ENCODE measurements at regions of chr6 and their contacts with region 1.

Region 1: GRCh38 chr6:100099189-100100074 is 105.4 kb upstream of the MCHR2 start:
- DNase-seq: no peak
- ATAC-seq: no peak
- H3K4me3 Mint-ChIP-seq: no peak overlapping the region
- H3K27ac Mint-ChIP-seq: no peak overlapping the region
- H3K4me1 Mint-ChIP-seq: no peaks in the 10 kb centered on the region
- H3K27me3 Mint-ChIP-seq: peaks cover 2% of the 10 kb centered on the region

Region 2: GRCh38 chr6:100001915-100002388 is 97.5 kb before region 1 on chr6:
- CTCF ChIA-PET with region 1: interaction called, 47 read pairs
- POLR2A ChIA-PET with region 1: no interaction called
- DNase-seq: peak; percentile 45
- ATAC-seq: peak; percentile 61
- H3K4me3 Mint-ChIP-seq: no peak overlapping the region
- H3K27ac Mint-ChIP-seq: no peak overlapping the region
- H3K4me1 Mint-ChIP-seq: no peaks in the 10 kb centered on the region
- H3K27me3 Mint-ChIP-seq: peaks cover 19% of the 10 kb centered on the region

Region 3: DNA sequence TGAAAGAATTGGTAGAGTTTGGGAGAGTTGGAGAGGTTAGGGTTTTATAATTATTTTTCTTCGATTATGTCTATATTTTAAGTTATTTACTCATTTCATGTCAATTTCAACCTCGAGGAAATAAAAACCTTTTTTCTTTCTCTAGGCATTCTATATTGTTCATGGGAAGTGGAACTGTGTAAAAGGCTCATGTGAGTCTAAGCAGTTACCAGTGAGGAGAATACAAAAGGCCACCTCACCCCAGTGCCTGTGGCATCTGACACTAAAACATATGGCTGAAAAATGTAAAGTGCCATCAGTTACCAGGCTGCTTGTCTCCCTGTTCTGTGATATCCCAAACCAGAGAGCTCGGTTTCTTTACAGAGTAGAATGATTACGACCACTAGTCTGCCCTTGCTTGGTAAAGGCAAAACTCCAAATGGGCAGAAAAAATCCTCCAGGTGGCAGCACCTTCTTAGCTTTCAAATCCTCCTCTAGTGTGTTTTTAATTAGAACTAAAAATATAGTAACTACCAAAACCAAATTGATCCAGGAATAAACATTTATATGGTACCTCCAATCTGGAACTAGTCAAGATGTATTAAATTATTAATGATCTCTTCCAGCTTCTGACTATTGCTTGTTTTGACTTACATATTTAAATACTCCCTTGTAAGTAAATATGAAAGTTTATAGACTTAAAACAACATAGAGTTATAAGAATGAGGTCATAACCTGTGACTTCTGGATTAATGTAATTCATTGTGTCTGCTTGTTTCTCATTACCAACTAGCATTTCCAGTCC is 17.2 kb after region 1 on chr6:
- CTCF ChIA-PET with region 1: interaction called, 14 read pairs
- POLR2A ChIA-PET with region 1: no interaction called
- DNase-seq: peak; percentile 43
- ATAC-seq: no peak
- H3K4me3 Mint-ChIP-seq: no peak overlapping the region
- H3K27ac Mint-ChIP-seq: no peak overlapping the region
- H3K4me1 Mint-ChIP-seq: no peaks in the 10 kb centered on the region
- H3K27me3 Mint-ChIP-seq: peaks cover 10% of the 10 kb centered on the region

Region 4: DNA sequence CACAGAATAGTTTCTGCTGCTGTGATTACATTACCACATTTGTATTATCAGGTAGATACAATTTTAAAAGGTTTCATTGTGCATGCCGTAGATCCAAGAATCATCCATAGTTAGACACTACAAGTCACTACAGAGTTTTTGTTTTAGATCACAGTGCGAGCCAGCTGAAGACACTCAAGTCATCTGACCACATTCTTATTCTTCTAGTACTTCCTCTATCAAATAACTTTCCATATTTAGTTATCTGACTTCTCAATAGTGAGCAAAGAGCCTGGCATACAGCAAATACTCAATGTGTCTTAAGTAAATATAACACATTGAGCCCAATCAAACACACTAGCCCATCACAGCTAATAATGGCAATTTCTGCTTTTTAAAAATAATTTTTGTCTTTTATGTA is 586.3 kb after region 1 on chr6:
- CTCF ChIA-PET with region 1: no interaction called
- POLR2A ChIA-PET with region 1: no interaction called
- DNase-seq: no peak
- ATAC-seq: no peak
- H3K4me3 Mint-ChIP-seq: no peak overlapping the region
- H3K27ac Mint-ChIP-seq: no peak overlapping the region
- H3K4me1 Mint-ChIP-seq: no peaks in the 10 kb centered on the region
- H3K27me3 Mint-ChIP-seq: no peaks in the 10 kb centered on the region